ENCODE measurements at regions of chr10 and their contacts with region 1.

Region 1: GRCh38 chr10:26860443-26861204 is at the start of gene ABI1:
- DNase-seq: peak; percentile 94 to 99 (median 97)
- ATAC-seq: peak; percentile 91
- H3K4me3 ChIP-seq: peak within 1 kb of the TSS; percentile 74 to 98
- H3K4me3 Mint-ChIP-seq: peak within 1 kb of the TSS; percentile 95
- H3K27ac ChIP-seq: peak within 1 kb of the TSS; percentile 88 to 93
- H3K27ac Mint-ChIP-seq: peak within 1 kb of the TSS; percentile 97
- H3K4me1 ChIP-seq: peaks cover 30% of the 10 kb centered on the region
- H3K4me1 Mint-ChIP-seq: peaks cover 29% of the 10 kb centered on the region
- H3K27me3 ChIP-seq: peaks cover 0 to 2% of the 10 kb centered on the region in 2 experiments
- H3K27me3 Mint-ChIP-seq: peaks cover 3% of the 10 kb centered on the region
- CTCF ChIP-seq: no peak
- total RNA-seq, gene ABI1: 91.6 to 94.5 TPM

Region 2: DNA sequence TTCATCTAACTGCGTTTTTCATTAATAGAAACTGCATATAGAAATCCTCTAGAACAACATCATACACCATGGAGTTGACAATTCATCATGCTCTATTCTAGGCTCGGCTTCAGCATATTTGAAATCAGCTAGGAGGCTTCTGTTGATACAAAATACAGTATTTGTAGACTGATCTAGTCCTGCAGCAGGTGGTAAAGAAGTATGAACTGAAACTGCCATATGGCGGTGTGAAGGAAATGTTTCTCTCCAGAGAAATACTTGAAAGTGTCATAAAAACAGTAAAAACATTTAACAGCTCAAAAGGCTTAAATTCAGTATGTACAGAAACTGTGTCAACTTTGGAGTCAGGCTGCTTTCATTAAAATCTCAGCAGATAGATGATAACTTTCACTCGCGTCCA is 958.6 kb before region 1 on chr10:
- CTCF ChIA-PET with region 1: no interaction called
- POLR2A ChIA-PET with region 1: no interaction called
- intact Hi-C with region 1: no loop called
- DNase-seq: no peak
- ATAC-seq: no peak
- H3K4me3 ChIP-seq: no peak overlapping the region
- H3K4me3 Mint-ChIP-seq: no peak overlapping the region
- H3K27ac ChIP-seq: no peak overlapping the region
- H3K27ac Mint-ChIP-seq: no peak overlapping the region
- H3K4me1 ChIP-seq: no peaks in the 10 kb centered on the region
- H3K4me1 Mint-ChIP-seq: no peaks in the 10 kb centered on the region
- H3K27me3 ChIP-seq: no peaks in the 10 kb centered on the region
- H3K27me3 Mint-ChIP-seq: peaks cover 2% of the 10 kb centered on the region
- CTCF ChIP-seq: no peak

Region 3: GRCh38 chr10:26486991-26487850 is 373.4 kb before region 1 on chr10:
- CTCF ChIA-PET with region 1: no interaction called
- POLR2A ChIA-PET with region 1: no interaction called
- intact Hi-C with region 1: loop called in 1 of 2 experiments (anchors 1 kb)
- DNase-seq: peak; percentile 16 to 92 (median 69)
- ATAC-seq: peak; percentile 75
- H3K4me3 ChIP-seq: peak overlapping the region in 1 of 2 experiments; percentile 2
- H3K4me3 Mint-ChIP-seq: peak overlapping the region; percentile 66
- H3K27ac ChIP-seq: peak overlapping the region; percentile 73 to 91
- H3K27ac Mint-ChIP-seq: peak overlapping the region; percentile 97
- H3K4me1 ChIP-seq: peaks cover 66% of the 10 kb centered on the region
- H3K4me1 Mint-ChIP-seq: peaks cover 71% of the 10 kb centered on the region
- H3K27me3 ChIP-seq: no peaks in the 10 kb centered on the region
- H3K27me3 Mint-ChIP-seq: no peaks in the 10 kb centered on the region
- CTCF ChIP-seq: no peak

Region 4: GRCh38 chr10:26725837-26726727 is 134.5 kb before region 1 on chr10:
- CTCF ChIA-PET with region 1: interaction called, 19 read pairs
- POLR2A ChIA-PET with region 1: no interaction called
- intact Hi-C with region 1: loop called in 1 of 2 experiments (anchors 5 kb)
- DNase-seq: peak in 8 of 9 experiments; percentile 26 to 77 (median 48)
- ATAC-seq: peak; percentile 47
- H3K4me3 ChIP-seq: no peak overlapping the region
- H3K4me3 Mint-ChIP-seq: no peak overlapping the region
- H3K27ac ChIP-seq: no peak overlapping the region
- H3K27ac Mint-ChIP-seq: no peak overlapping the region
- H3K4me1 ChIP-seq: peaks cover 5% of the 10 kb centered on the region
- H3K4me1 Mint-ChIP-seq: peaks cover 12% of the 10 kb centered on the region
- H3K27me3 ChIP-seq: no peaks in the 10 kb centered on the region
- H3K27me3 Mint-ChIP-seq: no peaks in the 10 kb centered on the region
- CTCF ChIP-seq: peak; percentile 99

Region 5: GRCh38 chr10:26821699-26822570 is 38.7 kb before region 1 on chr10:
- CTCF ChIA-PET with region 1: no interaction called
- POLR2A ChIA-PET with region 1: interaction called, 4 read pairs
- intact Hi-C with region 1: loop called in 1 of 2 experiments (anchors 5 kb)
- DNase-seq: no peak
- ATAC-seq: no peak
- H3K4me3 ChIP-seq: no peak overlapping the region
- H3K4me3 Mint-ChIP-seq: no peak overlapping the region
- H3K27ac ChIP-seq: no peak overlapping the region
- H3K27ac Mint-ChIP-seq: no peak overlapping the region
- H3K4me1 ChIP-seq: peaks cover 4% of the 10 kb centered on the region
- H3K4me1 Mint-ChIP-seq: peaks cover 70% of the 10 kb centered on the region
- H3K27me3 ChIP-seq: no peaks in the 10 kb centered on the region
- H3K27me3 Mint-ChIP-seq: no peaks in the 10 kb centered on the region
- CTCF ChIP-seq: no peak

Region 6: GRCh38 chr10:26839966-26840627 is 20.5 kb before region 1 on chr10:
- CTCF ChIA-PET with region 1: no interaction called
- POLR2A ChIA-PET with region 1: no interaction called
- intact Hi-C with region 1: no loop called
- DNase-seq: no peak
- ATAC-seq: no peak
- H3K4me3 ChIP-seq: no peak overlapping the region
- H3K4me3 Mint-ChIP-seq: peak overlapping the region; percentile 0
- H3K27ac ChIP-seq: no peak overlapping the region
- H3K27ac Mint-ChIP-seq: peak overlapping the region; percentile 24
- H3K4me1 ChIP-seq: peaks cover 44% of the 10 kb centered on the region
- H3K4me1 Mint-ChIP-seq: peaks cover 78% of the 10 kb centered on the region
- H3K27me3 ChIP-seq: no peaks in the 10 kb centered on the region
- H3K27me3 Mint-ChIP-seq: no peaks in the 10 kb centered on the region
- CTCF ChIP-seq: no peak

Region 7: GRCh38 chr10:27099916-27100812 is 239.5 kb after region 1 on chr10 and contains the start of gene ANKRD26:
- CTCF ChIA-PET with region 1: no interaction called
- POLR2A ChIA-PET with region 1: no interaction called
- intact Hi-C with region 1: loop called (anchors 5 kb)
- DNase-seq: peak; percentile 88 to 99 (median 97)
- ATAC-seq: peak; percentile 53
- H3K4me3 ChIP-seq: peak within 1 kb of the TSS; percentile 84
- H3K4me3 Mint-ChIP-seq: peak within 1 kb of the TSS; percentile 93
- H3K27ac ChIP-seq: peak within 1 kb of the TSS; percentile 70 to 94
- H3K27ac Mint-ChIP-seq: peak within 1 kb of the TSS; percentile 95
- H3K4me1 ChIP-seq: peaks cover 35% of the 10 kb centered on the region
- H3K4me1 Mint-ChIP-seq: peaks cover 51% of the 10 kb centered on the region
- H3K27me3 ChIP-seq: no peaks in the 10 kb centered on the region
- H3K27me3 Mint-ChIP-seq: no peaks in the 10 kb centered on the region
- CTCF ChIP-seq: no peak
- total RNA-seq, gene ANKRD26: 4.0 to 4.7 TPM

Region 8: GRCh38 chr10:27504007-27504807 is 643.6 kb after region 1 on chr10 and contains the start of gene RAB18:
- CTCF ChIA-PET with region 1: no interaction called
- POLR2A ChIA-PET with region 1: no interaction called
- intact Hi-C with region 1: loop called (anchors 5 to 10 kb)
- DNase-seq: peak; percentile 94 to 99 (median 98)
- ATAC-seq: peak; percentile 95
- H3K4me3 ChIP-seq: peak within 1 kb of the TSS; percentile 73 to 82
- H3K4me3 Mint-ChIP-seq: peak within 1 kb of the TSS; percentile 99
- H3K27ac ChIP-seq: peak within 1 kb of the TSS; percentile 81 to 90
- H3K27ac Mint-ChIP-seq: peak within 1 kb of the TSS; percentile 98
- H3K4me1 ChIP-seq: peaks cover 33% of the 10 kb centered on the region
- H3K4me1 Mint-ChIP-seq: peaks cover 52% of the 10 kb centered on the region
- H3K27me3 ChIP-seq: no peaks in the 10 kb centered on the region
- H3K27me3 Mint-ChIP-seq: no peaks in the 10 kb centered on the region
- CTCF ChIP-seq: no peak
- total RNA-seq, gene RAB18: 130 to 146 TPM